PC-9 (cell line): ENCODE measurements at regions of chr2 and their contacts with region 1.

Region 1: DNA sequence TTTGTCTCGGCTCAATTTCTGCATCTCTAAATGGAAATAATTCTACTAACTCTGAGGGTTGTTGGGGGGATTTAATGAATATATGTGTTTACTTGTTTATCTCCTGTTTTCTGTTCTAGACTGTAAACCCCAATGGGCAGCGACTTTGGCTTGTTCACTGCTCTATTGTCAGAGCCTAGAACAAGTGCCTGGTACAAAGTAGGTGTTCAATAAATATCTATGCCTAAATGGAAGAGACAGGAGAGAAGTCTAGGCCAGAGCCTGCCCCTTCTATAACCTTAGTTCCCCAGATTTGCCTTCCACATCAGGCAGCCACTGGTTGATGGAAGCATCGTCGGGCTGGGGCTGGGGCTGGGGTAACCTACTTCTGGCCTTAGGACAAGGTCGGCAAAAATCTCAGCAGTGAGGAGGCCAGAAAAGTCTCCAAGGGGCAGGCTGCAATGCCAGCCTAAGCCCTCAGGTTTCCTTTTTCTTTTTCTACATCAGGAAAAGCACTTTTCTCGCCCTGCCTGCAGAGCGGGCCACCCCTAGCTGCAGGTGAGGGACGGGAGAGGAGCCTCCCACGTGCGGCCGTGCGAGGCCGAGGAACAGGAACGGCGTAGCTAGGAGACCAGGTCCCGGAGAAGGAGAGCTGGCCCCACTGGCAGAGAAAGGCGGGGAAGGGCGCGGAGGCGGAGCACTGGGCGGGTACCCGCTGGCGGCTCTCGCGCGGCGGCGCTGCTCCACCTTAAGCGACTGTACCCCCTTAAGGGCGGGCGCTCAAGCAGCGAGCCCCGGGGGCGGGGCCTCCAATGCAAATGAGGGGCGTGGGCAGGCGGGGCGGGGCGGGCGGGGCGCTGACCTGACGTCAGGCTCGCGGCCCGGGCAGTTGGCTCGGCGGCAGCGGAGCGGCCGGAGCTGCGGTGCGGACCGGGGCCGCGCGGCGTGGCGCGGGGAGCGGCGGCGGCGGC is at the start of gene CNNM4:
- DNase-seq: peak; percentile 90 to 98
- H3K4me3 ChIP-seq: peak within 1 kb of the TSS; percentile 87
- H3K27ac ChIP-seq: no peak within 1 kb of the TSS; the same call in 1 of the 2 replicates
- H3K4me1 ChIP-seq: peaks cover 47% of the 10 kb centered on the region
- H3K27me3 ChIP-seq: no peaks in the 10 kb centered on the region
- CTCF ChIP-seq: no peak
- total RNA-seq, gene CNNM4: 28.2 and 31.4 TPM in 2 replicates

Region 2: GRCh38 chr2:96329416-96330269 is 430.7 kb before region 1 on chr2:
- CTCF ChIA-PET with region 1: no interaction called
- POLR2A ChIA-PET with region 1: no interaction called
- intact Hi-C with region 1: loop called (anchors 10 kb)
- DNase-seq: peak; percentile 54 to 85
- H3K4me3 ChIP-seq: no peak overlapping the region
- H3K27ac ChIP-seq: peak overlapping the region; percentile 28
- H3K4me1 ChIP-seq: peaks cover 24% of the 10 kb centered on the region
- H3K27me3 ChIP-seq: no peaks in the 10 kb centered on the region
- CTCF ChIP-seq: no peak

Region 3: GRCh38 chr2:96665083-96665569 is 95.2 kb before region 1 on chr2:
- CTCF ChIA-PET with region 1: no interaction called
- POLR2A ChIA-PET with region 1: interaction called, 14 read pairs
- intact Hi-C with region 1: no loop called
- DNase-seq: peak; percentile 76 to 99
- H3K4me3 ChIP-seq: peak overlapping the region; percentile 23; the same call in 1 of the 2 replicates
- H3K27ac ChIP-seq: peak overlapping the region; percentile 82
- H3K4me1 ChIP-seq: peaks cover 19% of the 10 kb centered on the region
- H3K27me3 ChIP-seq: no peaks in the 10 kb centered on the region
- CTCF ChIP-seq: no peak

Region 4: DNA sequence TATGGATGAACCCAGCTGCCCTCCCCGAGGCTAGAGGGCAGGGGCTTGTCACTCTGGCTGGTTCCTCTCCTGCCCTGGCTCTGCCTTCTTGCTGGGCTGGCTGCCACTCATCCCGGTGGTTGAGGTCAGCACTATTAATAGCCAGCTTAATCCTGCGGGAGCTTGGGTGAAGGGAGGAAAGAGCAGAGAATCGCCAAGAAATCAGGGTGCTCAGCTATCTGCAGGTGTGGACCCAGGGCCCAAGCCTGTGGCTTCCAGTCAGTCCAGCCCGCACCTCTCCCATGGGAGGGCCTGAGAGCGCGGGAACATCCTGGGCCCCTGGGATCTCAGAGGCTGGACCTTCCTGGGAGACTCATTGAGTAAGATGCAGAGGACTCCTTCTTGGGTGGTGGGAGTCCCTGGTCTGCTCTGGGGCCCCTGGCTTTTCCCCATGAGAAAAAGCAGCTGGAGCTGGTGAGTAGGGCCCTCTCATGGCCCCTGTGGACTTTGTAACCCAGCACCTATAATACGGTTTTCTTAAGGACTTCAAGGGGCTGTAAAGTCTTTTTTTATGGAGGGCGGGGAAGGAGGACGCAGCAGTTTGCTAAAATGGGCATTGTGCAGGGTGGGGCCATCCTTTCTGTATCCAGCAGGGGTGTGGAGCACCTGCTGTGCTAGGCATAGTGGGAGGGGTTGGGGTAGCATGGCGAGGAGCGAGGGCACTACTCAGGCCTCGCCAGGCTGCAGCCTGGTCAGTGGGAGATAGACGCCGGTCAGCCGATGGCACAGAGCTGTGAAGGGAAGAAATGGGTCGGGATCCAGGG is 28.3 kb after region 1 on chr2:
- CTCF ChIA-PET with region 1: interaction called, 11 read pairs
- POLR2A ChIA-PET with region 1: no interaction called
- intact Hi-C with region 1: no loop called
- DNase-seq: peak; percentile 51 to 67
- H3K4me3 ChIP-seq: no peak overlapping the region
- H3K27ac ChIP-seq: peak overlapping the region; percentile 73
- H3K4me1 ChIP-seq: peaks cover 42% of the 10 kb centered on the region
- H3K27me3 ChIP-seq: no peaks in the 10 kb centered on the region
- CTCF ChIP-seq: no peak

Region 5: GRCh38 chr2:96816128-96816835 is 56.0 kb after region 1 on chr2 and contains the start of gene CNNM3:
- CTCF ChIA-PET with region 1: no interaction called
- POLR2A ChIA-PET with region 1: interaction called, 3 read pairs
- intact Hi-C with region 1: loop called (anchors 2 kb)
- DNase-seq: peak; percentile 87 to 99
- H3K4me3 ChIP-seq: peak within 1 kb of the TSS; percentile 87
- H3K27ac ChIP-seq: peak within 1 kb of the TSS; percentile 7; the same call in 1 of the 2 replicates
- H3K4me1 ChIP-seq: peaks cover 26% of the 10 kb centered on the region
- H3K27me3 ChIP-seq: no peaks in the 10 kb centered on the region
- CTCF ChIP-seq: peak; percentile 74
- total RNA-seq, gene CNNM3: 28.7 and 28.8 TPM in 2 replicates

Region 6: DNA sequence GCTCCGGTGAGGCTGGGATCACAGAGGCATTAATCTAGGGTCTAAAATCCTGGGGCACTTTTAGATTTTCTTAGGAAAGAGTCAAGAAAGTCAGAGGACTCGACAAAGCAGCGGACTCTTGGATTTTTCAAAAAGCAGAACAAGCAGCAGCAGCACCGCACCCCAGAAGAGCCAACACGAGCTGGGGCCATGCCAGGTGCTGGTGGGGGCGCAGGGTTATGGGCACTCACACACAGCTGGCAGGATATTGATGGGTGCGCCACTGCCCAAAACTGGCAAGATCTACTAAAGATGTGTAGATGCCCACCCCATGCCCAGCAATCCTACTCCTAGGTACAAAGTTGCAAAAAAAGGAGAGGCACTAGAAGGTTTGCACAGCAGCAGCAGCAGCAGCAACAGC is 143.5 kb after region 1 on chr2:
- CTCF ChIA-PET with region 1: no interaction called
- POLR2A ChIA-PET with region 1: interaction called, 10 read pairs
- intact Hi-C with region 1: no loop called
- DNase-seq: peak in 1 of 2 experiments; percentile 25
- H3K4me3 ChIP-seq: no peak overlapping the region
- H3K27ac ChIP-seq: no peak overlapping the region
- H3K4me1 ChIP-seq: peaks cover 10% of the 10 kb centered on the region
- H3K27me3 ChIP-seq: no peaks in the 10 kb centered on the region
- CTCF ChIP-seq: no peak; the same call in 1 of the 2 replicates